Cardiac septum (tissue), 1 donor: ENCODE measurements at regions of chr9 and their contacts with region 1.

Region 1: DNA sequence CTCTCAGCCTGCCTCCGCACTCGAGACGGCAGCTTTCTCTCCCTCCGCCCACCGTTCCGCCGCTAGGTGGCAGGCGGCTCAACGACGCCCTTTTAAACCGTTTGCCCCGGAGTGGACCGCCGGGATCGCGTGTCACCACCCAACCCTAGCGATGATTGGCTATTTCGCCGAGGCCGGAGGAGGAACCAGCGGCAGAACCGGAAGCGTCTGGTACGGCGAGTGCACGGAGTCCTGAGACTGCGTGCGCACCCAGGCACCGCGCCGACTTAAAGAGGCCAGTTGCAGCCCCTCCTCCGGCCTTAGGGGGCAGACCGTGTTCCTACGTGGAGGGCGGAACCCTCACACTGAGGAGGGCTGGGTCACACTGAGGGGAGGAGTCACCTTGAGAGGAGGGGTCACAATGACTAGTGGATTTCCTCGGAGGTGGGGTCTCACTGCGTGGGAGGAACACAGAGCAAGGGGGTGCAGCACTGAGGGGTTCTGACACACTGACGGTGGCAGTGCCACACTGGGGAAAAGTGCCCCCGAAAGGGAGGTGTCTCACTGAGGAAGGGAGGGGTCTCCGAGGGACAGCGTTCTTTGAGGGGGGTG is 980 bp upstream of the TESK1 start:
- DNase-seq: peak; percentile 100

Region 2: DNA sequence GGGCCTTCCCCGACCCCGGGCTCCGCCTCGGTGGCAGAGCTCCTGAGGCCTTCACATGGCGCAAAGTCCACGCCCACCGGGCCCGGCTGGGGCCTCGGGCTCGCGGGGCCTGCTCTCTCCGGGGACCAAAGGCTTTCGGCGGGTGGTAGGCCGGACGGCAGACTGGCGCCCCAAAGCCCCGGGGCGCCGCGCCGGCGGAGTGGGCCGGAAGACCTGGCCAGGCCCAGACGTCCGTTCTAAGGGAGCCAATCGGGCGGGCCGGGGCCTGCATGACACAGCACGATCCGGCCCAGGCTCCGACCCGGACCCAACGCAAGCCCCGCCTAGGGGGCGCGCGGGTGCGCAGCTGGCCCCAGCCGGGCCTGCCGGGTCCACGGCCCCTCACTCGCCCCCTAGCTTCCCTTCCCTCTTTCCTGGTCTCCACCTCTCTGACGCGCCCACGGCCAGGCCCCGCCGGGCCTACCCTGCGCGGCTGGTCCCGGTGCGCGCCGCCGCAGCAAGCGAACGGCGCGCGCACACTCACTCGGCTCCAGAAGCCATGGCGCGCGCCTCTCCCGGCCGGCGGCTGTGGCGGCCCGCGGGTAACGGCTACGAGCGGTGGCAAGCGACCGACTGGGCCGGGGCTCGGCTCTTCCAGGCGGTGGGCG is 532.1 kb before region 1 on chr9:
- intact Hi-C with region 1: loop called (anchors 10 kb)
- DNase-seq: peak; percentile 94

Region 3: GRCh38 chr9:35489313-35490154 is 114.5 kb before region 1 on chr9 and contains the start of gene RUSC2:
- intact Hi-C with region 1: loop called (anchors 2 kb)
- DNase-seq: peak; percentile 93
- total RNA-seq, gene RUSC2: 44.5 TPM

Region 4: DNA sequence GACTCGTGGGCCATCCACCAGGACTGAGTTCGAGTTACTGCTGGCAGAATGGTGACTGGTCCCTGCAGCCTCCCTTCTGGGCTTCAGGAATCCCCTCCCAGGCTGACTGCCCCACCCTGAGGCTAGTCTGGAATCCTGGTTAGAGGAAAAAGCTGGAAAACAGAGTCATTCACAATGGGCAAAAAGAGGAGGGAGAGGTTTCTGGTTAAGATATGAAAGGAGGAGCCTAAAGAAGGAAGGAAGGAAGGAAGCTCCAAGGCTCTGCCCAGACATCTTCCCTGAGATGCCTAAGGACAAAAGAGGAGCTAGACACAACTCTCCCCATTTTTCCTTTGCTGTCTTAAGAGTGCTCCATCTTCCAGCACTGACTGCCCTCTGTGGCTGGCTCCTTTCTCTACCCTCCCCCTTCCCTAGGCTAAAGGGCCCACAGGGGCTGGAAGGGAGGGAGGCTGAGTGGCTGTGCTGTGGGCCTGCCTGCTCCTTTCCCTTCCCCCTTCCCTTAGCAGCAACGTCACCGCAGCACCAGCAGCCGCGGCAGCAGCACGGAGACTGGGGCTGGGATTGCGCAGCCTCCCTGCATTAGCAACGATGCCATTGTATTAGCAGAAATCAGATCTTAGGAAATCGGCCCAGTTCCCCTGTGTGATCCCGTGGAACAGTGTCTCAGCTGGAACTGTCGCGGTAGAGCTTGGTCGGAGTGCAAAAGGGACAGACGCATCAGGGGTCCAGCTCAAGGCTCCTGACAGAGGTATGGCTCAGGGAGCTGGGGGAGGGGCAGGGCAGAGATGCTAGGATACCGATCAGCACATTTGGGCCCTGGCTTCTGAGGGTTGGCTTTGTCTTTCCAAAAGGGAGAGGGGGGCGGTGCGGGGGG is 65.5 kb before region 1 on chr9:
- intact Hi-C with region 1: no loop called
- DNase-seq: peak; percentile 85

Region 5: DNA sequence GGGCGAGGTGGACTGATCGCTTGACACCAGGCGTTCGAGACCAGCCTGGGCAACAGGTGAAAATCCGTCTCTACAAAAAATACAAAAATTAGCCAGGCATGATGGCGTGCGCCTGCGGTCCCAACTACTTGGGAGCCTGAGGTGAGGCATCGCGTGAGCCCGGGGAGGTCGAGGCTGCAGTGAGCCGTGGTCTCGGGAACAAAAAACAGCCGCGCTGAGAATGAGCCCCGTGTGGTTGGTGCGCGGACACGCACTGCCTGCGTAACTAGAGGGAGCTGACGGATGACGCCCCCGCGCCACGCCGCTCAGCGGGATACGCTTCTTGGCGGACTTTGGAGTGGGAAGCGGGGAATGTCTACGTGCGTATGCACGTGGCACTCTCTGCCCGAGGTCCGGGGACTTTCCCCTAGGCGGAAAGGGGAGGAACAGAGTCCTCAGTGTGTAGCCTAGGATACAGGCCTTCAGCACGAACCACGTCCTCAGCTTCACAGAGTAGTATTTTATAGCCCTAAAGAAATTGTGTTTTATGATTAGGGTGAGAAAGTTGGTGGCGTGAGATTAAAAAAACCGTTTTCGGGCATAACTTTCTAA is 53.6 kb after region 1 on chr9 and contains the start of gene RMRP:
- intact Hi-C with region 1: loop called (anchors 2 kb)
- DNase-seq: peak; percentile 96
- total RNA-seq, gene RMRP: 10,677 TPM

Region 6: GRCh38 chr9:35732122-35732799 is 128.2 kb after region 1 on chr9 and contains the starts of genes CREB3 and TLN1:
- intact Hi-C with region 1: loop called (anchors 5 kb)
- DNase-seq: peak; percentile 100
- total RNA-seq, gene CREB3: 25.0 TPM
- total RNA-seq, gene TLN1: 291 TPM

Region 7: GRCh38 chr9:35954942-35955546 is 351.0 kb after region 1 on chr9:
- intact Hi-C with region 1: no loop called
- DNase-seq: no peak